MCF 10A (cell line): ENCODE measurements at regions of chr6 and their contacts with region 1.

Region 1: GRCh38 chr6:26156076-26156849 is 69.0 kb downstream of the HFE start:
- DNase-seq: peak; percentile 91
- H3K4me3 Mint-ChIP-seq: peak overlapping the region; percentile 82
- H3K27ac Mint-ChIP-seq: peak overlapping the region; percentile 64
- H3K4me1 Mint-ChIP-seq: peaks cover 23% of the 10 kb centered on the region
- H3K27me3 Mint-ChIP-seq: no peaks in the 10 kb centered on the region
- CTCF ChIP-seq: no peak

Region 2: DNA sequence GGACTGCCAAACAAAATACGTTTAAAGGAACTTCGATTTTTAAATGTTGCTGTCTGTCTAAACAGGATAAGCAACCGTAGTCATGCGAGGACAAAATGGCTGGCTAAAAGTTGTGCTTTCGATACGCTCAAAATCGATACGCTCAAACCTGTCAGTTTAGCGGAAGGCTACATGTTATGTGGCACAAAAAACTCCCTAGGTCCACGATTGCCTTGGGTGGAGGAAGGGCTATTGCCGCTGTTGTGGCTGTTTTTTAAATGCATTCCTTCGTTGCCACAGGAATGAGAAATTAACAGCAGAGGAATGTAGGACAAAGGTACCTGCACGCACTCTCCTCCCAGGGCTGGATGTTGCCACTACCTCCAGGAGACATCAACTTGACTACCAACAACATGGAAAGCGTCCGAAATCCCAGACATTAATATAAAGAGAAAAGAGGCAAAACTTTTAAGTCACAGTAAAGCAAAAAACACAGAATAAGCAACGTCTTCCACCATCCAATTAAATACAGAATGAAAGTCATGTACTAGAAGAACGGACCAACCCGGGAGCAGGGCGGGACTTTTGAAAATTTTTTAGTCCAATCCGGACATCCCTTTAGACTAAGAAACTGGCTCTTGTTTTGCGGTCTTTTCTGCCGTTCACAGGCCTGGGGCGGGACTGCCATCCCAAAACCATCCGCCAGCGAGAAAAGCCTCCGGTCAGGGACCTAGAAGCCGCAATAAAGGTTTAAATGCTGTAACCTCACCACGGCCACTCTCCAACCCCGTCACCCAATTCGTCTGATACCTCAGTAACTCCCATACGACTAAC is 101.2 kb before region 1 on chr6:
- CTCF ChIA-PET with region 1: interaction called, 4 read pairs
- POLR2A ChIA-PET with region 1: interaction called, 103 read pairs
- intact Hi-C with region 1: loop called (anchors 5 kb)
- DNase-seq: peak; percentile 96
- H3K4me3 Mint-ChIP-seq: peak overlapping the region; percentile 74
- H3K27ac Mint-ChIP-seq: peak overlapping the region; percentile 92
- H3K4me1 Mint-ChIP-seq: no peaks in the 10 kb centered on the region
- H3K27me3 Mint-ChIP-seq: no peaks in the 10 kb centered on the region
- CTCF ChIP-seq: no peak

Region 3: GRCh38 chr6:26175428-26176181 is 19.3 kb after region 1 on chr6:
- CTCF ChIA-PET with region 1: interaction called, 11 read pairs
- POLR2A ChIA-PET with region 1: interaction called, 487 read pairs
- intact Hi-C with region 1: no loop called
- DNase-seq: peak; percentile 82
- H3K4me3 Mint-ChIP-seq: peak overlapping the region; percentile 23
- H3K27ac Mint-ChIP-seq: peak overlapping the region; percentile 70
- H3K4me1 Mint-ChIP-seq: peaks cover 28% of the 10 kb centered on the region
- H3K27me3 Mint-ChIP-seq: no peaks in the 10 kb centered on the region
- CTCF ChIP-seq: peak; percentile 70

Region 4: DNA sequence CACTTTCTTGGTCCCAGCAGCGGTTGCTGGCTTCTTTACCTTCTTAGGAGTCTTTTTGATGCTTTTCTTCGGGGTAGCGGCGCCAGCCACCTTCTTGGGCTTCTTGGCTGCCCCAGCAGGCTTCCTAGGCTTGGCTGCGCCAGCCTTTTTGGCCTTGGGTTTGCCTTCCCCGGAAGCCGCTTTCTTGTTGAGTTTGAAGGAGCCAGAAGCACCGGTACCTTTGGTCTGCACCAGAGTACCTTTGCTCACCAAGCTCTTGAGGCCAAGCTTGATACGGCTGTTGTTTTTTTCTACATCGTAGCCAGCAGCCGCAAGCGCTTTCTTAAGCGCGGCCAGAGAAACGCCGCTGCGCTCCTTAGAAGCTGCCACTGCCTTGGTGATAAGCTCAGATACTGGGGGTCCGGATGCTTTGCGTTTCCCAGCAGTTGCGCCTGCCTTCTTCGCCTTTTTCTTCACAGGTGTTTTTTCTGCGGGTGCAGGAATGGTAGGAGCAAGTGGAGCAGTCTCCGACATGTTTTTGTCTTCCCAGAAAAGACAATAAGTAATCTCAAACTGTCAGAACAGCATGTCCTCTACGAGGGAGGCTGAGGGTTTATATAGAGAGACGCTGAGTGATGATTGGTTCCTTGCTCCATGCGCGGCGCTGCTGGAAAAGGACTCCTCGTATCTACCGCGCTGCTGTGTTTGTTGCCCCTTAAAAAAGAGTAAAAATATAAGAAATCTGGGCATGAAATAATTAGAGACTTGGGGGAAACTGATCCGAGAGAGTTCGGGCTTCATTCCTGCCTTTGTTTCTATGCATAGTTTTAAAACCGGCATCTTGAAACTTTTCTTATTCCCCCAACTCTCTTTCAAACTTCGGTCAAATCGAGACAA is 78.4 kb after region 1 on chr6:
- CTCF ChIA-PET with region 1: no interaction called
- POLR2A ChIA-PET with region 1: interaction called, 47 read pairs
- intact Hi-C with region 1: no loop called
- DNase-seq: peak; percentile 90
- H3K4me3 Mint-ChIP-seq: peak overlapping the region; percentile 82
- H3K27ac Mint-ChIP-seq: peak overlapping the region; percentile 85
- H3K4me1 Mint-ChIP-seq: peaks cover 32% of the 10 kb centered on the region
- H3K27me3 Mint-ChIP-seq: no peaks in the 10 kb centered on the region
- CTCF ChIP-seq: no peak

Region 5: DNA sequence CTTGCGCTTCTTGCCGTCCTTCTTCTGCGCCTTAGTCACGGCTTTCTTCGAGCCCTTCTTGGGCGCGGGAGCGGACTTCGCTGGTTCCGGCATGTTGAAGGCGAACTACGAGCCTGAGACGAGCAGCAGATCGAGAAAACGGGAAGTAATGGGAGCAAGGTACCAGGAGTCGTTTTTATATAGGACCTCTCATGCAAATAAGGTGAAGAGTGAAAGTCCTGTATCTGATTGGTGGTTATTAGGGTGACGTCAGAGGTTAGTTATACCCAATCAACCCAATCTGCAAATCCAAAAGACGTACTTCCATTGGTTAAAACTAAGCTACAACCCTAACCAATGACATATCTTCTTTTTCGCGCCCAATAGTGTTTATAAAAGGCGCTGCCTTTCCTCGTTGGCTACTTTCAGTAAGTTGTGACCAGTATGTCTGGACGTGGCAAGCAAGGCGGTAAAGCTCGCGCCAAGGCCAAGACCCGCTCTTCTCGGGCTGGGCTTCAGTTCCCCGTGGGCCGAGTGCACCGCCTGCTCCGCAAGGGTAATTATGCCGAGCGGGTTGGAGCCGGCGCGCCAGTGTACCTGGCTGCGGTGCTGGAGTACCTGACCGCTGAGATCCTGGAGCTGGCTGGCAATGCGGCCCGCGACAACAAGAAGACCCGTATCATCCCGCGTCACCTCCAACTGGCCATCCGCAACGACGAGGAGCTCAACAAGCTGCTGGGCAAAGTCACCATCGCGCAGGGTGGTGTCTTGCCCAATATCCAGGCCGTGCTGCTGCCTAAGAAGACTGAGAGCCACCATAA is 990.6 kb after region 1 on chr6:
- CTCF ChIA-PET with region 1: no interaction called
- POLR2A ChIA-PET with region 1: interaction called, 80 read pairs
- intact Hi-C with region 1: no loop called
- DNase-seq: peak; percentile 99
- H3K4me3 Mint-ChIP-seq: no peak overlapping the region
- H3K27ac Mint-ChIP-seq: no peak overlapping the region
- H3K4me1 Mint-ChIP-seq: no peaks in the 10 kb centered on the region
- H3K27me3 Mint-ChIP-seq: no peaks in the 10 kb centered on the region
- CTCF ChIP-seq: no peak

Region 6: GRCh38 chr6:27871924-27872638 is 1715.8 kb after region 1 on chr6:
- CTCF ChIA-PET with region 1: no interaction called
- POLR2A ChIA-PET with region 1: interaction called, 54 read pairs
- intact Hi-C with region 1: no loop called
- DNase-seq: peak; percentile 89
- H3K4me3 Mint-ChIP-seq: peak overlapping the region; percentile 79
- H3K27ac Mint-ChIP-seq: peak overlapping the region; percentile 93
- H3K4me1 Mint-ChIP-seq: peaks cover 2% of the 10 kb centered on the region
- H3K27me3 Mint-ChIP-seq: no peaks in the 10 kb centered on the region
- CTCF ChIP-seq: no peak